ENCODE measurements at regions of chr11 and their contacts with region 1.

Region 1: GRCh38 chr11:77127232-77127911 is 674 bp upstream of the MYO7A start:
- DNase-seq: peak; percentile 71
- ATAC-seq: peak; percentile 59
- H3K4me3 ChIP-seq: peak overlapping the region in 4 of 5 experiments; percentile 20 to 47 (median 34)
- H3K4me3 Mint-ChIP-seq: peak overlapping the region; percentile 73
- H3K27ac ChIP-seq: no peak overlapping the region
- H3K27ac Mint-ChIP-seq: no peak overlapping the region
- H3K4me1 ChIP-seq: peaks cover 15 to 20% of the 10 kb centered on the region in 2 donors
- H3K4me1 Mint-ChIP-seq: peaks cover 21% of the 10 kb centered on the region
- H3K27me3 ChIP-seq: peaks cover 0 to 13% (median 0%) of the 10 kb centered on the region in 4 experiments
- H3K27me3 Mint-ChIP-seq: peaks cover 10% of the 10 kb centered on the region
- CTCF ChIP-seq: peak; percentile 95

Region 2: GRCh38 chr11:77147668-77148321 is 20.4 kb after region 1 on chr11:
- CTCF ChIA-PET with region 1: interaction called, 14 read pairs
- POLR2A ChIA-PET with region 1: no interaction called
- intact Hi-C with region 1: no loop called
- DNase-seq: peak; percentile 31
- ATAC-seq: peak; percentile 60
- H3K4me3 ChIP-seq: peak overlapping the region in 2 of 5 experiments; percentile 20 to 31
- H3K4me3 Mint-ChIP-seq: peak overlapping the region; percentile 83
- H3K27ac ChIP-seq: no peak overlapping the region
- H3K27ac Mint-ChIP-seq: no peak overlapping the region
- H3K4me1 ChIP-seq: peaks cover 0 to 10% of the 10 kb centered on the region in 2 donors
- H3K4me1 Mint-ChIP-seq: peaks cover 7% of the 10 kb centered on the region
- H3K27me3 ChIP-seq: peaks cover 0 to 11% (median 3%) of the 10 kb centered on the region in 4 experiments
- H3K27me3 Mint-ChIP-seq: peaks cover 16% of the 10 kb centered on the region
- CTCF ChIP-seq: no peak

Region 3: DNA sequence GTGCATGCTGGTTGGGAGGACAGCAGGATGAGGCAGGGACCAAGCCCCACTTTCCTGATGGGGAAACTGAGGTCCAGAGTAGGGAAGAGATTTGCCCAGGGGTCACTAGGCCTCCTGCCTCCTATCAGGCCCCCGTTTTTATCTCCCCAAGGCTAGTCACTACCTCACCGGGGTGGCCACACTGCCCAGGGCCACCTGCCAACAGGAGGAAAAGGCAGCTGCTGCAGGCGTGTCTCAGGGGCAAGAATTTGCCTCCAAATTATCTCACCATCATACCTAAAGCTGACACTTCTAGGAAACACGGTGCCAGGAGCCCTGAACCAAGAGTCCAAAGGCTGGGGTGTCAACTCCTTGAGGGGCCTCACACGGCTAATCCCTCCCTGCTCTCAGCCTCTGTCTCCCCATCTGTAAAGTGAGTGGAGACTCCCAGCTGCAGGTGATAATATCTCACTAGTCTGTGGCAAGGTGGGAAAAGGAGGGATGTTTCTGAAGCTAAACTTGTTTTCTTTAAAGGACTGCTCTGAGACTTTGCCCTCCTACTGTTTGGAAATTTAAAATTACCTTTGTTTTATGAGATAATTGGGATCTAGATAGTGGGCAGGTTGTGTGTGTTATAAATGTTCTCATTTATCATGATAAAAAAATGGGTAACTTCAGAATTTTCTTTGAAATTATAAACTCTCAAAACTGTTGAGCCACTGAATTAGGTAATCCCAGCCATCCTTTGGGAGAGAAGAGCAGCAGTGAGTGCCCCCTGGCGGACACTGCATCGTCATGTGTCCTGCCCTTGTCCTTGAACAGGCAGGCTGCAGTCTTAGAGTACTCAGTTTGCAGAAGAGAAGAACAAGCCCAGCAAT is 60.6 kb after region 1 on chr11:
- CTCF ChIA-PET with region 1: interaction called, 25 read pairs
- POLR2A ChIA-PET with region 1: no interaction called
- intact Hi-C with region 1: no loop called
- DNase-seq: peak; percentile 58
- ATAC-seq: peak; percentile 43
- H3K4me3 ChIP-seq: no peak overlapping the region
- H3K4me3 Mint-ChIP-seq: no peak overlapping the region
- H3K27ac ChIP-seq: no peak overlapping the region
- H3K27ac Mint-ChIP-seq: no peak overlapping the region
- H3K4me1 ChIP-seq: no peaks in the 10 kb centered on the region
- H3K4me1 Mint-ChIP-seq: no peaks in the 10 kb centered on the region
- H3K27me3 ChIP-seq: no peaks in the 10 kb centered on the region
- H3K27me3 Mint-ChIP-seq: no peaks in the 10 kb centered on the region
- CTCF ChIP-seq: peak; percentile 82

Region 4: DNA sequence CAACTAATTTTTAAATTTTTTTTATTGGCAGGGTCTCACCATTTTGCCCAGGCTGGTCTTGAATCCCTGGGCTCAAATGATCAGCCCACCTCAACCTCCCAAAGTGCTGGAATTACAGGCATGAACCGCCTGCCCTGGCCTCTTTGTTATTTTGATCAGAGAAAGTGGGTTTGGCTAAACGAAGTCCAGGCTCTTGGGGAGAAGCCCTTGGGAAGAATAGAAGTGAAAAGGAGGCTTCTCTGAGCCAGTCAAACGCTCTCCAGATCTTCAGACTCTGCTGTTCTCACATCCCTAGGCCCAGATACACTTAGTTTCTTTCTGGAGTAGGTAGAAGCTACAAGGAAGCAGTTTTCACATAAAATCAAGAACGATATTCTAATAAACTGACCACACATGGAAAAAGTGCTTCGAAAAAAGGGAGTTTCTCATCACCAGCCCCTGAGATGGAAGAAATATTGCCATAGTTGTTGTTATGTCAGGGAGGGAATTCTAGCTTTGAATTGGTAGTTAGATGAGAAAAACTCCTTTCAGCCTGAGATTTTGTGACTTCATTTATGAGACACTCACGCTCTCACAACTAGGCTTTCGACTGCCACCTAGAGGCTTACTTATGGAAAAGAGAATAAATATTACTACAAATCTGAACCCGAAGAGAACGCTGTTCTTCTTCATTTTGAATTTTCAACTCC is 420.6 kb after region 1 on chr11:
- CTCF ChIA-PET with region 1: interaction called, 32 read pairs
- POLR2A ChIA-PET with region 1: no interaction called
- intact Hi-C with region 1: no loop called
- DNase-seq: peak; percentile 69
- ATAC-seq: peak; percentile 28
- H3K4me3 ChIP-seq: no peak overlapping the region
- H3K4me3 Mint-ChIP-seq: no peak overlapping the region
- H3K27ac ChIP-seq: no peak overlapping the region
- H3K27ac Mint-ChIP-seq: no peak overlapping the region
- H3K4me1 ChIP-seq: no peaks in the 10 kb centered on the region
- H3K4me1 Mint-ChIP-seq: peaks cover 4% of the 10 kb centered on the region
- H3K27me3 ChIP-seq: no peaks in the 10 kb centered on the region
- H3K27me3 Mint-ChIP-seq: no peaks in the 10 kb centered on the region
- CTCF ChIP-seq: peak; percentile 84

Region 5: GRCh38 chr11:77619576-77620198 is 492.3 kb after region 1 on chr11:
- CTCF ChIA-PET with region 1: interaction called, 18 read pairs
- POLR2A ChIA-PET with region 1: no interaction called
- intact Hi-C with region 1: no loop called
- DNase-seq: peak; percentile 65
- ATAC-seq: no peak
- H3K4me3 ChIP-seq: no peak overlapping the region
- H3K4me3 Mint-ChIP-seq: no peak overlapping the region
- H3K27ac ChIP-seq: no peak overlapping the region
- H3K27ac Mint-ChIP-seq: no peak overlapping the region
- H3K4me1 ChIP-seq: no peaks in the 10 kb centered on the region
- H3K4me1 Mint-ChIP-seq: no peaks in the 10 kb centered on the region
- H3K27me3 ChIP-seq: no peaks in the 10 kb centered on the region
- H3K27me3 Mint-ChIP-seq: no peaks in the 10 kb centered on the region
- CTCF ChIP-seq: peak; percentile 86